ENCODE measurements at regions of chr9 and their contacts with region 1.

Region 1: GRCh38 chr9:123349691-123350480 is 6.1 kb upstream of the CRB2 start:
- DNase-seq: peak; percentile 56
- ATAC-seq: peak; percentile 92
- H3K4me3 Mint-ChIP-seq: peak overlapping the region; percentile 24
- H3K27ac Mint-ChIP-seq: peak overlapping the region; percentile 64
- H3K4me1 Mint-ChIP-seq: peaks cover 17% of the 10 kb centered on the region
- H3K27me3 Mint-ChIP-seq: no peaks in the 10 kb centered on the region
- CTCF ChIP-seq: no peak

Region 2: DNA sequence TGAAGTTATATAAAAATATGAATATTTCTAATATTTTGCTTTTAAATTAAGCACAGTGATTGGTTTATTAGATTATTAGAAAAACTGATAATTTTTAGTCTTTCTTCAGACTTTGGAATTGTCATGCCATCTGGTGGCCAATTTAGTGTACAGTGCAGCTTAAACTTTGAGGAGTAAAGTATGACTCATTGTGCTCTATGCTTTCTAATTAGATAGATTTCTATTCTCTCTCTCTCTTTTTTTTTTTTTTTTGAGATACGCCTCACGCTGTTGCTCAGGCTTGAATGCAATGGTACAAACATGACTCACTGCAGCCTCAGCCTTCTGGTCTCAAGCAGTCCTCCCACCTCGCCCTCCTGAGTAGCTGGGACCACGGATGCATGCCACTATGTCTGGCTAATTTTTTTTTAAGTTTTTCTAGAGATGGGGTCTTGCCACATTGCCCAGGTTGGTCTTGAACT is 358.5 kb before region 1 on chr9:
- CTCF ChIA-PET with region 1: interaction called, 3 read pairs
- POLR2A ChIA-PET with region 1: interaction called, 3 read pairs
- intact Hi-C with region 1: loop called (anchors 2 kb)
- DNase-seq: no peak
- ATAC-seq: peak; percentile 95
- H3K4me3 Mint-ChIP-seq: no peak overlapping the region
- H3K27ac Mint-ChIP-seq: no peak overlapping the region
- H3K4me1 Mint-ChIP-seq: peaks cover 4% of the 10 kb centered on the region
- H3K27me3 Mint-ChIP-seq: no peaks in the 10 kb centered on the region
- CTCF ChIP-seq: no peak

Region 3: DNA sequence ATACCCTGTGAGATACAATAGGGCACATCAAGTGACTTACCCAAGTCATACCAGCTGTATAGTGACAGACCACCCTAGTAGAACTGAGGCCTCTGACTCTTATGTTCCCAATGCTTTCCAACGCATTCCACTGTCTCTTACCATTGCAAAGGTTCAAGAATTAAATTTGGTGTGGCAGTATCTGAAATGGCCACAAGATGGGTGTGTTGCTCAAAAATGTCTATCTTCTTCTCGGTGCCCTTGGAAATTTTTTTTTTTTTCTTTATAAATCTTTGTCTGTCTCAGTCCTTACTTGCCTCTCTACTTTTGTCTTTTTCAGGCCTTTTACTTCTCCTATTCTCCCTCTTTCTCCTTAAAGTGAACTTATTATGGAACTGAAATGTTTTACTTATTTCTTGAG is 268.1 kb before region 1 on chr9:
- CTCF ChIA-PET with region 1: interaction called, 118 read pairs
- POLR2A ChIA-PET with region 1: interaction called, 7 read pairs
- intact Hi-C with region 1: loop called (anchors 1 kb)
- DNase-seq: no peak
- ATAC-seq: peak; percentile 66
- H3K4me3 Mint-ChIP-seq: no peak overlapping the region
- H3K27ac Mint-ChIP-seq: no peak overlapping the region
- H3K4me1 Mint-ChIP-seq: peaks cover 19% of the 10 kb centered on the region
- H3K27me3 Mint-ChIP-seq: no peaks in the 10 kb centered on the region
- CTCF ChIP-seq: peak; percentile 44

Region 4: DNA sequence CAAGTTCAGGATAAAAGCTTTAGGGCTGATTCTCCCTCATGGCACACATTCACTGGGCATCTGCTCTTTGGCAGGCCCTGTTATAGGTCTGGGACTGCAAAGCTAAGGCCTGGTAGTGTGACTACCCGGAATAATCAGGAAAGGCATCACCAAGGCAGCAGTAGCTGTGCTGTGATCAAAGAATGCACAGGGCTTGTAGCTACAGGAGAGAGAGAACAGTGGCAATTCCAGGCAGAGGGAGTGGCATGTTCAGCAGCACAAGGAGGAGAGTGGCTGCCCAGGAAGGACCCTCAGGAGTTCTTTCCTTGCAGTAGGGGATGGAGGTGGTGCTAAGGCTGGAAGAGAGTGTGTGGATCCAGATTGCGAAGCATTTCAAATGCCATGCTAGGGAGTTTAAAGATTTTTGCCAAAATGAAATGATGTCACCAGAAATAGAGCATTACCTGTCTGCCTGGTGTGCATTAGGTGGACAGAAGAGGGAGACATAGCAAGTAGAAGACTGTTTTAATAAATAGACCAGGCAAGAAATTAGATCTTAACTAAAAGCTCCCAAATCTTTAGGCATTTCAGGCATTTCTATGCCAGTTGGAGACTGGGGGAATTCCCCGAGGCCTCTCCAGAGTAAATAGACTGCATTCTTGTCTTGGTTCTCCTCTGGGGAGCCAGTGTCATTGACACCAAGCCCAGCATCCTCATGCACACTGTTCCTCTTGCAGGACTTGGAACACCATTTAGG is 247.3 kb before region 1 on chr9:
- CTCF ChIA-PET with region 1: interaction called, 62 read pairs
- POLR2A ChIA-PET with region 1: no interaction called
- intact Hi-C with region 1: loop called (anchors 1 kb)
- DNase-seq: no peak
- ATAC-seq: peak; percentile 34
- H3K4me3 Mint-ChIP-seq: no peak overlapping the region
- H3K27ac Mint-ChIP-seq: peak overlapping the region; percentile 71
- H3K4me1 Mint-ChIP-seq: peaks cover 12% of the 10 kb centered on the region
- H3K27me3 Mint-ChIP-seq: no peaks in the 10 kb centered on the region
- CTCF ChIP-seq: no peak

Region 5: GRCh38 chr9:123225374-123225813 is 124.5 kb before region 1 on chr9:
- CTCF ChIA-PET with region 1: interaction called, 12 read pairs
- POLR2A ChIA-PET with region 1: interaction called, 4 read pairs
- intact Hi-C with region 1: loop called (anchors 1 kb)
- DNase-seq: no peak
- ATAC-seq: peak; percentile 92
- H3K4me3 Mint-ChIP-seq: peak overlapping the region; percentile 45
- H3K27ac Mint-ChIP-seq: peak overlapping the region; percentile 84
- H3K4me1 Mint-ChIP-seq: peaks cover 55% of the 10 kb centered on the region
- H3K27me3 Mint-ChIP-seq: no peaks in the 10 kb centered on the region
- CTCF ChIP-seq: no peak

Region 6: GRCh38 chr9:124040935-124041816 is 691.3 kb after region 1 on chr9:
- CTCF ChIA-PET with region 1: interaction called, 3 read pairs
- POLR2A ChIA-PET with region 1: no interaction called
- intact Hi-C with region 1: loop called (anchors 2 kb)
- DNase-seq: peak; percentile 66
- ATAC-seq: peak; percentile 64
- H3K4me3 Mint-ChIP-seq: peak overlapping the region; percentile 75
- H3K27ac Mint-ChIP-seq: no peak overlapping the region
- H3K4me1 Mint-ChIP-seq: peaks cover 24% of the 10 kb centered on the region
- H3K27me3 Mint-ChIP-seq: peaks cover 43% of the 10 kb centered on the region
- CTCF ChIP-seq: peak; percentile 68

Measured in activated B cell treated with CpG ODN at 0.5 μM for 24 hours (primary cell).